Transverse colon (tissue), 4 donors: ENCODE measurements at regions of chr10 and their contacts with region 1.

Region 1: GRCh38 chr10:76382381-76382851 is 951.0 kb downstream of the LRMDA start:
- DNase-seq: no peak
- H3K4me3 ChIP-seq: no peak overlapping the region
- H3K27ac ChIP-seq: peak overlapping the region in 1 of 4 donors; percentile 0
- H3K4me1 ChIP-seq: no peaks in the 10 kb centered on the region
- H3K27me3 ChIP-seq: no peaks in the 10 kb centered on the region
- CTCF ChIP-seq: no peak
- EP300 ChIP-seq: no peak
- POLR2A ChIP-seq: no peak

Region 2: DNA sequence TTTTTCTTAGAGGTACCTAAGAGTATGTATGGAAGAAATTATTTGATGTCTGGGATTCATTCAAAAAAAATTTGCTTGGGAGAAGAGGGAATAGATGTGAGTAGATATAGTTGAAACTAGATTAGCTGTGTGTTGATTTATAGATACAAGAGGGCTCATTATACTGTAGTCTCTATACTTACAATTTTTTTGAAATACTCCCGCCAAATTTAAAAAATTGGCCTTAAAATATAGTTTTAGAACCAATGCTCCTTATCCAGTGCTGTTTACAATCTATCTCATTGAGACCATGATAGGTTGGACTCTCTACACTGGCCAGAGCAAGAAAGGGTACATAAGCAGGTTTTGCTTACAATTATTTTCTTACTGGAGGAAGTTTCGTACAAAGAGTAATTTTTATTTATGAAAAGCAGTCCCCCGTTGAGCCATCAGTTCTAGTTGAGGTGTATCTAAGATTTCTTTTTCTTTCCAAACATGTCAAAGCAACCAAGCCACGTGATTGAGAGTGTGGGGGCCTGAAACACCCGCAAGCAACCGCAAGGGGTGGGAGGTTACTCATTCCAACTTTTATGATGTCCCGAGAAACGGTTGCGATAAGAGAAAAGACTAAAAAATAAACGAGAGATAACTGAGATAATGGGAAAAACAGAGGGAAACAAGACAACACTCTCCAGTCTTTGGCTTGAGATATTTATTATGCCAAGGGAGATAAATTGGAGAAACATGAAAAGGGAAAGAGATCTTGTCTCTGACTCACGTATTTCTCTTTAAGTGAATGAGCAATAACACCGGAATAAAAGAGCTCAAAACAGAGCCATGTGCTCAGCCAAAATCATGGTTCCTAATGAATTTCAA is 221.7 kb before region 1 on chr10:
- in situ Hi-C with region 1: no loop called
- intact Hi-C with region 1: no loop called
- DNase-seq: no peak
- H3K4me3 ChIP-seq: no peak overlapping the region
- H3K27ac ChIP-seq: no peak overlapping the region
- H3K4me1 ChIP-seq: no peaks in the 10 kb centered on the region
- H3K27me3 ChIP-seq: no peaks in the 10 kb centered on the region
- CTCF ChIP-seq: no peak
- EP300 ChIP-seq: no peak
- POLR2A ChIP-seq: no peak

Region 3: DNA sequence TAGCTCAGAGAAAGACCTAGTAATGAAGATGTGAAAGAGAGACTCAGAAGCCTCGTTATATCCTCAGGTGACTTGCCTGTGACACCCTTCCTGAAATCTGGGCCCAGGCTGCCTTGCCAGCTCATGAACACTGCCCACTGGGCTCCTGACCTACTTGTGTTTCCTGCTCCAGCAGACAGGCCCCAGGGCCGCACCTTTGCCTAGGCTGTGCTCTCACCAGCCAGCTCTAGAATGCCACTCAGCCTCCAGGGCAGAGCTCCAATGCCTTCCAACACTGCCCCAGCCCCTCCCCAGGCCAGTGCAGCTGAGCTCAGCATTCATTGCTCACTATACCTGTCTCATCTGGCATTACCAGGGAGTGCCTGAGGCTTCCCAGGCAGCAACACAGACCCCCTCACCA is 1449.8 kb after region 1 on chr10:
- in situ Hi-C with region 1: no loop called
- intact Hi-C with region 1: loop called (anchors 5 kb)
- DNase-seq: no peak
- H3K4me3 ChIP-seq: no peak overlapping the region
- H3K27ac ChIP-seq: no peak overlapping the region
- H3K4me1 ChIP-seq: peaks cover 0 to 14% (median 0%) of the 10 kb centered on the region in 4 donors
- H3K27me3 ChIP-seq: no peaks in the 10 kb centered on the region
- CTCF ChIP-seq: no peak
- EP300 ChIP-seq: no peak
- POLR2A ChIP-seq: no peak